ENCODE measurements at regions of chr12 and their contacts with region 1.

Region 1: DNA sequence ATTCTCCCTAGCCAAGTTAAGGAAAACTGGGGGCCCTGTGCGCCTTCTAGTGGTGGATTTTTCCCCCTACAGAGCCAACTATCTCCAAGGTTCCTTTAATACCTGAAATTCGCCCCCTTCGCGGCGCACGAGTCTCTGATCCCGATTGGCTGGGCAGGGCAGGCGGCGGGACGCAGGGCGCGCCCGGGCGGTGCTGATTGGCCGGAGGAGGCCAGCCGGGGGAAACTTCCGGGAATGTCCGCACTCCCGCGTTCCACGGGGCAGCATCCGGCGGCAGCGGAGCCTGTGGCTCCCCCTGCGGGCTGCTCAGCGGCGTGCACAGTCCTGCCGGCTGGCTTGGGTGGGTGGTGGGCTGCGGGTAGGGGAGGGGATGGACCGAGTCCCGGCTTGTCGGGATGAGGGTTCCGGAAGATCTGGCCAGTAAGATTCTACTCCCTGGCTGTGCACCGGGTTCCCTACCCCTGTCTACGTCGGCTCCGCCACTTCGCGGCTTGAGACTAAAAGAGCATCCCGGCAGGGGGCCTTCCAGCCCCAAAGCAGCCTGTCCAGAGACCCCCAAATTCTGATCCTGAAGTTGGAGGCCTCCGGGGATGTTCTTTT is at the start of gene NABP2:
- DNase-seq: peak; percentile 88
- ATAC-seq: peak; percentile 72
- H3K4me3 Mint-ChIP-seq: peak within 1 kb of the TSS; percentile 99
- H3K27ac Mint-ChIP-seq: peak within 1 kb of the TSS; percentile 98
- H3K4me1 Mint-ChIP-seq: peaks cover 48% of the 10 kb centered on the region
- H3K27me3 Mint-ChIP-seq: no peaks in the 10 kb centered on the region
- CTCF ChIP-seq: peak; percentile 67
- total RNA-seq, gene NABP2: 27.7 and 31.4 TPM in 2 replicates

Region 2: GRCh38 chr12:55738123-55739024 is 485.8 kb before region 1 on chr12:
- CTCF ChIA-PET with region 1: interaction called, 6 read pairs
- POLR2A ChIA-PET with region 1: interaction called, 5 read pairs
- intact Hi-C with region 1: loop called (anchors 1 kb)
- DNase-seq: peak; percentile 65
- ATAC-seq: peak; percentile 87
- H3K4me3 Mint-ChIP-seq: peak overlapping the region; percentile 92
- H3K27ac Mint-ChIP-seq: peak overlapping the region; percentile 91
- H3K4me1 Mint-ChIP-seq: peaks cover 27% of the 10 kb centered on the region
- H3K27me3 Mint-ChIP-seq: no peaks in the 10 kb centered on the region
- CTCF ChIP-seq: peak; percentile 73

Region 3: GRCh38 chr12:56127888-56128669 is 96.1 kb before region 1 on chr12 and contains the start of gene ESYT1:
- CTCF ChIA-PET with region 1: interaction called, 5 read pairs
- POLR2A ChIA-PET with region 1: interaction called, 46 read pairs
- intact Hi-C with region 1: loop called (anchors 1 kb)
- DNase-seq: peak; percentile 83
- ATAC-seq: peak; percentile 86
- H3K4me3 Mint-ChIP-seq: peak within 1 kb of the TSS; percentile 97
- H3K27ac Mint-ChIP-seq: peak within 1 kb of the TSS; percentile 98
- H3K4me1 Mint-ChIP-seq: peaks cover 69% of the 10 kb centered on the region
- H3K27me3 Mint-ChIP-seq: no peaks in the 10 kb centered on the region
- CTCF ChIP-seq: no peak
- total RNA-seq, gene ESYT1: 120 and 137 TPM in 2 replicates

Region 4: DNA sequence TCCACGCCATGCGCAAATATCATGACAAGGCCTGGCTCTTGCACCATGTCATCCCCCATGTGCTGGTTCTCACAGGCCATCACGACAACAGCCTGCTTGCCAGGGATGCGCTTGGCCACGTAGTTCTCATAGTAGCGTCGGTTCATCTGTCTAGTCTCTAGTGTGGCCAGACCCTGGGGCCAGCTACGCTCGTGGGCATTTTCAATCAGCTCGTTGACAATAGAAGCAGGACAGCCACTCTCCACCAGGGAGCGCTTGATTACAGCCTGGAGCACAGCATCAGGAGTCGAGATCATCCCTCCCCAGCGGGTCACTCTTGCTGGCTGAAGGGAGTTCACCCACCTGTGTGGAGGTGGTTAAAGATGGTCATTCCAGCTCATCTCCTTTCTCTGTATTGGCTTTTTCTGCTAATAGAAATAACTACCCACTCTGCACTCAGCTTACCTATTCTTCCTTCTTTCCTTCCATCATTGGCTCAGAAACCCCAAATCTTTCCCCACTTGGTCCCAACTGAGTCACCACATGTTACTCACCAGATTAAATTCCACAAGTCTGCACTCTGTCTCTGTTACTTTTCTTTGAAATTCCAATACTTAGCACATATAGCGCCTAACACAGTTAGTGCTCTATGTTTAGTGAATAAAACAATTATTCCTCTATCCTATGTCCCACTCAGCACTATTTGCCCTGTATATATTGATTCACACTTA is 17.6 kb before region 1 on chr12:
- CTCF ChIA-PET with region 1: interaction called, 52 read pairs
- POLR2A ChIA-PET with region 1: interaction called, 111 read pairs
- intact Hi-C with region 1: loop called (anchors 1 kb)
- DNase-seq: no peak
- ATAC-seq: peak; percentile 47
- H3K4me3 Mint-ChIP-seq: no peak overlapping the region
- H3K27ac Mint-ChIP-seq: peak overlapping the region; percentile 80
- H3K4me1 Mint-ChIP-seq: peaks cover 39% of the 10 kb centered on the region
- H3K27me3 Mint-ChIP-seq: no peaks in the 10 kb centered on the region
- CTCF ChIP-seq: no peak

Region 5: DNA sequence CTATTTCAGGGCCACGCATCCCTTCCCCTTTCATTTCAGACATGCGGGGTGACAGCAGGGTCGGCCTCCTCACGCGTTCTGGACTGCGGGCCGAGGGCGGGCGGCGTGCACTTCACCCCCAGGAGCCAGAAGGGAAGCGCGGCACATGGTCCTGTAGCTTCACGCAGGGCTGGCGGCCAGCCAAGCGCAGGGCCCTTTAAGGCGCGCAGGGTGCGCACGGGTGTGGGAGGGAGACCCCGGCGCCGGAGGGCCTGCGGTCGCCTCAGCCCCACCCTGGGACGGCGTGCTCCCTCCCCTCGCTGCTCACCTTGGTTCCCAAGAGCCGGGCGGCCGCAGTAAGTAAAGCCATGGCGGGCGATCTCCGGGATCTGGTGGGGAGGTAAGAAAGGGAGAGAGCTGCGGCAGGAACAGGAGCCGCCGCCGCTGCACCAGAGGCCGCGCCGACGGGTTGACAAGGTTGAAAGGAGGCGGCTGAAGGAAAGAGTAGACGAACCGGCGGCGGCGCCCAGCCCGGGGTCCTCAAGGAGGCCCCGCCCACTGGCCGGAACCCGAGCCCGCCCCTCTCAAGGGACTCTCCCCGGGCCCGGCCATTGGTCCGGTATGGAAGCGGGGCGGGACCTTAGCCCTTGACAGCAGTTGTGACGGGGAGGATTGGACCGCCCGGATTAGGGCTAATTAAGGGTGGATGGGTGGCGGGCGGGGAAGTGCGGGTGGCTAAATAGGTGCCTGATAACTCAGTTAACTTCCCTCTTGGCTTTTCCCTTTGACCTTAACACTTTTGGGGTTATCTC is 75.8 kb after region 1 on chr12 and contains the start of gene CS:
- CTCF ChIA-PET with region 1: no interaction called
- POLR2A ChIA-PET with region 1: no interaction called
- intact Hi-C with region 1: loop called (anchors 1 kb)
- DNase-seq: peak; percentile 97
- ATAC-seq: peak; percentile 96
- H3K4me3 Mint-ChIP-seq: peak within 1 kb of the TSS; percentile 96
- H3K27ac Mint-ChIP-seq: peak within 1 kb of the TSS; percentile 97
- H3K4me1 Mint-ChIP-seq: peaks cover 59% of the 10 kb centered on the region
- H3K27me3 Mint-ChIP-seq: no peaks in the 10 kb centered on the region
- CTCF ChIP-seq: no peak
- total RNA-seq, gene CS: 229 and 233 TPM in 2 replicates

Region 6: GRCh38 chr12:56448860-56449621 is 224.8 kb after region 1 on chr12 and contains the start of gene TIMELESS:
- CTCF ChIA-PET with region 1: no interaction called
- POLR2A ChIA-PET with region 1: interaction called, 14 read pairs
- intact Hi-C with region 1: no loop called
- DNase-seq: peak; percentile 85
- ATAC-seq: peak; percentile 96
- H3K4me3 Mint-ChIP-seq: peak within 1 kb of the TSS; percentile 94
- H3K27ac Mint-ChIP-seq: peak within 1 kb of the TSS; percentile 97
- H3K4me1 Mint-ChIP-seq: peaks cover 22% of the 10 kb centered on the region
- H3K27me3 Mint-ChIP-seq: no peaks in the 10 kb centered on the region
- CTCF ChIP-seq: no peak
- total RNA-seq, gene TIMELESS: 31.8 and 35.0 TPM in 2 replicates

Measured in activated B cell treated with CpG ODN at 0.5 μM for 24 hours (primary cell).